AG04449 (cell line): ENCODE measurements at regions of chr1 and their contacts with region 1.

Region 1: GRCh38 chr1:214328770-214329469 is 48.0 kb downstream of the SMYD2 start:
- DNase-seq: no peak
- H3K4me3 ChIP-seq: no peak overlapping the region
- CTCF ChIP-seq: peak; percentile 92

Region 2: GRCh38 chr1:214205053-214205452 is 123.9 kb before region 1 on chr1:
- CTCF ChIA-PET with region 1: interaction called, 91 read pairs
- POLR2A ChIA-PET with region 1: no interaction called
- DNase-seq: no peak
- H3K4me3 ChIP-seq: no peak overlapping the region
- CTCF ChIP-seq: no peak

Region 3: DNA sequence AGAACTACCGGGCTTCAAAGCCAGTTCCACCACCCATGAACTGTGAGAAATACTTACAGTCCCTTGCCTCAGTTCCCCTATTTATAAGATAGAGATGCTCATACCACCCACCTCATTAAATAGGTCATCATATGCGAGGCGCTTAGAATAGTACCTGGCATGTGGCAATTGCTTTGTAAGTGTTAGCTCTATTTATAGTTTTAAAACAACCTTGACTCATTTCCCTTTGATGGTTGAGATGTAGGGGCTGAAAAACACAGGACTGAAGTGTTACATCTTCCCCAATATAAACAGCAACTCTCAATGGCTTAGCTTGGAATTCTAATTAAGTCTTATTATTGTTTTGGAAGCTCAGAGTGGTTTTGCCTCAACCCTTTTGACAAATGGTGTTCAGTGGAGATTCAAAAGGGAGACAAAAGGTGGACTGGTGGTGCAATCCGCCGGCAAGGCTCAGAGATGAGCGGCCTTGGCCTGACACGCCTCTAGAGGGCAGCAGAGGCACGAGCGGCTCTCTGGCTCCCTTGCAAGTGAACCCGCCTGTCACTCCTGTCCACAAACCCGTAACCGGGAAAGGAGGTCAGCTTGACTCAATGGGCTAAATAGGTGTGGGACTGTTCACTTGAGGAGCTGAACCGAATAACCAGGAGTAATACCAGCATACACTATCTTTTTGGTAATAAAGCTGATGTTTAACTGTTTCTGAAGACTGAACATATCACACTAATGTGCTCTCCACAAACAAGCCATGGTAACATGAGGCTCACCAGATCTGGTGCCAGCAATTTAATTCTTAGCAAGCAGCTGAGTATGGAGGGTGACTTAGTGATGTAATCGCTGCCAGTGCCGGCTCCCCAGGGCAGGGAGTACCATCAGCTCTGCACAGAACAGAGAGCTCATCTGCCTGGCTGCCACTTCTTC is 67.5 kb before region 1 on chr1:
- CTCF ChIA-PET with region 1: interaction called, 477 read pairs
- POLR2A ChIA-PET with region 1: interaction called, 3 read pairs
- DNase-seq: peak; percentile 23
- H3K4me3 ChIP-seq: 0 out of 2 replicates have a peak overlapping the region, but pooled peaks have one; percentile 21
- CTCF ChIP-seq: peak; percentile 97

Region 4: GRCh38 chr1:214310010-214310409 is 18.9 kb before region 1 on chr1:
- CTCF ChIA-PET with region 1: interaction called, 247 read pairs
- POLR2A ChIA-PET with region 1: no interaction called
- DNase-seq: no peak
- H3K4me3 ChIP-seq: no peak overlapping the region
- CTCF ChIP-seq: no peak

Region 5: GRCh38 chr1:214445831-214446614 is 117.1 kb after region 1 on chr1:
- CTCF ChIA-PET with region 1: interaction called, 11 read pairs
- POLR2A ChIA-PET with region 1: no interaction called
- DNase-seq: peak; percentile 89
- H3K4me3 ChIP-seq: no peak overlapping the region
- CTCF ChIP-seq: no peak

Region 6: DNA sequence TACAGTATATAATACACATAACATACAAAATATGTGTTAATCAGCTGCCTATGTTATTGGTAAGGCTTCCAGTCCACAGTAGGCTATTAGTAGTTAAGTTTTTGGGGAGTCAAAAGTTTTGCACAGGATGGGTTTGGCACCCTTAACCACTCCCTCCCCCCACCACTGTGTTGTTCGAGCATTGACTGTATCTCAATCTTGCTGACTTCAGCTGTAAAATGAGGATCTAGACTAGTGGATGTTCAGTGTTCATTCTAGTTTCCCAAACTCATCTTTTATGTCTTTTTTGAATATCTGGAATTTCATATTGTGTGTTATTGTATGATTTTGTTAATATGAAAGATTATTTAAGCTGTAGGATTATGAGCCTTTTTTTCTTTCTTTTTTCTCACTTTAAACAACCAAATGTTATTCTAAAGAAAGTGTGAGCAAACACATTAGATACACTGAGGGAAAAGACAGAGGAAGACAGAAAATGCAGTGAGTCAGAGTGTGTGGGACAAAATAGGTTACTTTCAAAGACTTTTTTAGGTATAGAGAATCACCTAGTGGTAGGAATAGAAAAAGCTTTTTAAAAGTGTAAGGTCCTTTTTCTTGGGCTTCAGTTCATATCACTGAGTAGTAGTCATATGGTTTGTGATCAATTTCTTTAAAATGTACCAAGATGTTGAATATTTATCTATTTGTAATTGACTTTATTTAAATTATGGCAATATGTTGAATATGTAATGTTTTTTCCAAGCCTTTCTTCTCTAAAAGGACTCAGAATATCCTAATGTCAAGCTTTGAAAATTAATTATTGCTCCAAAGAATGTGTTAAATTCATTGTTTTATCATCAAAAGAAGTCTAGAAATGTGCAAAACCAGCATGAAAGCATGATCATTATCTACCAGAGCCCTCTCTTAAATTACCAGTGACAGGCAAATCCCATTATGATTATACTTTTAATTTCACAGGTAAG is 256.2 kb after region 1 on chr1:
- CTCF ChIA-PET with region 1: interaction called, 493 read pairs
- POLR2A ChIA-PET with region 1: interaction called, 3 read pairs
- DNase-seq: no peak
- H3K4me3 ChIP-seq: no peak overlapping the region
- CTCF ChIP-seq: peak; percentile 45

Region 7: DNA sequence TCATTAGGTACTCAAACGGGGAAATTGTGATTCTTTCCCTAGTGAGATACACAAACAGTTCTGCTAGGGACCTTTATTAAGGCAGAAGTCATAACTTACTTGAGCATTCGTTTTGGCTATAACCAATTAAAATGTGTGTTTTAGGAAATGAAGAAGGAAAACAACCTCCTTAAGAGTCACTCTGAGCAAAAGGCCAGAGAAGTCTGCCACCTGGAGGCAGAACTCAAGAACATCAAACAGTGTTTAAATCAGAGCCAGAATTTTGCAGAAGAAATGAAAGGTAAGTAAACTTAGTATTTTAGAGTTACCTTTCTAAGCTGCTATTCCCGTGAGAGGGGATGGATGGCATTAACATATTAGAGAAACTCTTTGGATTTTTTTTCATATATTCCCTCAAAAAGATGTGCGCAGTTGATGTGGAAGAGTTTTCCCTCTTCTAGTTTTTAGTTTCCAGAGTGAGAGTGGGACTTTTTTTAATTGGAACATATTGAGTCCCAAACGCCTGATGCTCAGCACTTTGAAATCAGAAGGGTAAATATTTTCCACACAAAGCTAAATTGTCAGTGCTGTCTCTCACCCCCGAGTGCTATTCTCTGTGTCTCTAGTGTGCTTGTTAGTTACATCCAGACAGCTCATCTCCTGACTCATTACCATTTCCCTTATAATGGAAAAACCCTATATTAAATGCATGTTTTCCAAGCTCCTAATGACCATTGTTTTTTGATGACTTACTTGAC is 309.0 kb after region 1 on chr1:
- CTCF ChIA-PET with region 1: interaction called, 117 read pairs
- POLR2A ChIA-PET with region 1: no interaction called
- DNase-seq: no peak
- H3K4me3 ChIP-seq: no peak overlapping the region
- CTCF ChIP-seq: peak; percentile 57